ENCODE measurements at regions of chr5 and their contacts with region 1.

Region 1: DNA sequence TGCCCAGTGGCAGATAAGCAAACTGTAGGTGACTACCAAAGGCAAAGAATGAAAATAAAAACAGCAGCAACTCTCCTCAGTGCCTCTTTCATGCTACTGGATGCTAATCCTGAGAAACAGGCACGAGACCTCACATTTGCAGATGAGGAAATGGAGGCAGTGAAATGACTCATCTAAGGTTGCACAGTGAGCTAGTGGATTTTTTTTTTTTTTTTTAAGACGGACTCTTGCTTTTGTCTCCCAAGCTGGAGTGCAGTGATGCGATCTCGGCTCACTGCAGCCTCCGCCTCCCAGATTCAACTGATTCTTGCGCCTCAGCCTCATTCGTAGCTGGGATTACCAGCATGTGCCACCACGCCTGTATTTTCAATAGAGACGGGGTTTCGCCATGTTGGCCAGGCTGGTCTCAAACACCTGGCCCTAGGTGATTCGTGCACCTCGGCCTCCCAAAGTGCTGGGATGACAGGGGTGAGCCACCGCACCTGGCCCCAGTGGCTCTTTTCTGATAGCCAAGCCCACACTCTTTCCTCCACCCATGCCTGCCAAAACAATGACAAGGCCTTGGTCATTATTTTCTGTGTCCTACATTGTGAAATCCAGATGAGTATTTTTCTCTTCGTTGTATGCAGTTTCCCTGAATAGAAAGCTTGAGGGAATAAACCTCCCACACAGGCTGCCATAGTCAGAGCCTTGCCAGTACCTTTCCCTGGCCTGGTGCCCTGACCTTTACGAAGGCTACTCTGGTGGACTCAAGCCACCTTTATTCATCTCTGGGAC is 19.2 kb downstream of the DOCK2 start:
- DNase-seq: peak; percentile 50
- H3K4me3 Mint-ChIP-seq: peak overlapping the region; percentile 39
- H3K27ac Mint-ChIP-seq: peak overlapping the region; percentile 82
- H3K4me1 Mint-ChIP-seq: peaks cover 68% of the 10 kb centered on the region
- H3K27me3 Mint-ChIP-seq: no peaks in the 10 kb centered on the region

Region 2: DNA sequence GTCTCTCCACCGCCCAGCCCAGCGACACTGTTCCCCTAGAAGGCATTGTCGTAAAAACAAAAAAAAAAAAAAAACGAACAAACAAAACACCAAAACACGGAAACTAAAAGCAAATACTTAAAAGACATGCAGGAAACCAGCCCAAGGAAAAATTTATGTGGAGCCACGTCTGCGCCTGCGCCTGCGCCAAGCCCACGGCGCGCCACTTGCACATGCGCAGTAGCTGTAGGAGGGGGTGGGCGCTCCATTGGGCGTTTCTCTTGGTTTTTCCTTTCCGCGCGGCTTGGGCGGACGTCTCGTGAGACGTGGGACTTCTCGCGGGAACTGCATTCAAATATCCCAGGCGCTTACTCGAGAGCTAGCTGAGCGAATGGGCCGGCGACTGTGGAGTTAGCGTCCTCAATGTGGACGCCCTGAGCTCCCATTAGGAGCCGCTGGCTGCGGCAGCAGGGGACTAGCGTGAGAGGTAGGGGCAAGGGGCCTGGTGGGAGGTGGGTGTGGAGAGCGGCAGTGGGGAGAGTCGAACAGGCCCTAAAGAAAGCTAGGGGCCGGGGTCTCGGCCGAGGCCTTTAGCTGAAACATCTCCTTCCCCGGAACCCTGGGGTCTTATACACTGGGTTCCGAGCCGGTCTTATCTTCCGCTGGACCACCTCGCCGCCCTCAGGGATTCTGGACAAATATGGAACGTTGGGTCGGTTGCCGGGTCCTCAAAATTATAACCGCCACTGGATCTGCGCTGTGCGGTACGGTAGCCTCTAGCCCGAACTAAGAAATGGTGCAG is 72.7 kb before region 1 on chr5 and contains the start of gene SPDL1:
- CTCF ChIA-PET with region 1: interaction called, 4 read pairs
- POLR2A ChIA-PET with region 1: interaction called, 12 read pairs
- DNase-seq: peak; percentile 96
- H3K4me3 Mint-ChIP-seq: peak within 1 kb of the TSS; percentile 96
- H3K27ac Mint-ChIP-seq: peak within 1 kb of the TSS; percentile 82
- H3K4me1 Mint-ChIP-seq: peaks cover 42% of the 10 kb centered on the region
- H3K27me3 Mint-ChIP-seq: peaks cover 6% of the 10 kb centered on the region
- total RNA-seq, gene SPDL1: 37.8 to 39.8 TPM